ENCODE measurements at regions of chr10 and their contacts with region 1.

Region 1: GRCh38 chr10:84205049-84205852 is 10.9 kb downstream of the CDHR1 start:
- DNase-seq: peak; percentile 77
- CTCF ChIP-seq: peak; percentile 93

Region 2: DNA sequence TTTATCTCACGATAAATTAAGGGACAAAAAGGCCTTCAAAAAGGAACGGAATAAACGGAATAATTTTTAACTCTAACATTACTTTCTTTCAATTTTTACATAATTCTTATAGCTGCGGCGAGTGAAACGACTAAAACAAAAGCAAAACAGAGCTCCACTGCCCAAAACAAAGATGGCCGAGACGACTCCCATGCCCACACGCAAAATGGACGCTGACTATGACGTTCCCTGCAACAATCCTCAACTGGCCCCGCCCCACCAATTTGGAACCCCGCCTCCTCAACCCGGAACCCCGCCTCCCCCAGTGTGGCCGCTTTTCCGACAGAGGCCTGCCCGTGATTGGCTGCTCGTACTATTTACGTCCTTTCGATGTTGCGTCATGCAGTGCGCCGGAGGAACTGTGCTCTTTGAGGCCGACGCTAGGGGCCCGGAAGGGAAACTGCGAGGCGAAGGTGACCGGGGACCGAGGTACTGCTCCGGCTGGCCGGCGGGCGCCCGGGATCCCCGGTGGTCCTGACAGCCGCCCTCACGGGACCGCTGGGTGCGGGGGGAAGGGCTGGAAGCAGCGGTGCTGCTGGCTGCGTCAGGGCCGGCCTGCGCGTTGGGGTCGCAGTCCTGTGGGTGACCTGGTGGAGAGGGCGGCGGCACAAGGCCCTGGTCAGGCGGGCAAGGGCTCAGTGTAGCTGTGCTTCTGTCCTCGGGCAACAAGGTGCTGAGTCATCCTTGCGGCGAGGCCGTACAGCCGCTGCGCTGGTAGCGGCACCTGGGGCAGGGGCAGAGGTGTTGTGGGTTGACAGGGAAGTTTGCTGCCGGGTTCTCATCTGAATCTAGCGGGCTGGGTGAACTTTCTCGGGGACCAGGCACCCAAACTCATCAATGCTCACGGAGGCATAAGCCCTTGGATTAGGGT is 65.9 kb before region 1 on chr10 and contains the start of gene GHITM:
- CTCF ChIA-PET with region 1: interaction called, 78 read pairs
- POLR2A ChIA-PET with region 1: no interaction called
- DNase-seq: peak; percentile 95
- CTCF ChIP-seq: peak; percentile 3

Region 3: DNA sequence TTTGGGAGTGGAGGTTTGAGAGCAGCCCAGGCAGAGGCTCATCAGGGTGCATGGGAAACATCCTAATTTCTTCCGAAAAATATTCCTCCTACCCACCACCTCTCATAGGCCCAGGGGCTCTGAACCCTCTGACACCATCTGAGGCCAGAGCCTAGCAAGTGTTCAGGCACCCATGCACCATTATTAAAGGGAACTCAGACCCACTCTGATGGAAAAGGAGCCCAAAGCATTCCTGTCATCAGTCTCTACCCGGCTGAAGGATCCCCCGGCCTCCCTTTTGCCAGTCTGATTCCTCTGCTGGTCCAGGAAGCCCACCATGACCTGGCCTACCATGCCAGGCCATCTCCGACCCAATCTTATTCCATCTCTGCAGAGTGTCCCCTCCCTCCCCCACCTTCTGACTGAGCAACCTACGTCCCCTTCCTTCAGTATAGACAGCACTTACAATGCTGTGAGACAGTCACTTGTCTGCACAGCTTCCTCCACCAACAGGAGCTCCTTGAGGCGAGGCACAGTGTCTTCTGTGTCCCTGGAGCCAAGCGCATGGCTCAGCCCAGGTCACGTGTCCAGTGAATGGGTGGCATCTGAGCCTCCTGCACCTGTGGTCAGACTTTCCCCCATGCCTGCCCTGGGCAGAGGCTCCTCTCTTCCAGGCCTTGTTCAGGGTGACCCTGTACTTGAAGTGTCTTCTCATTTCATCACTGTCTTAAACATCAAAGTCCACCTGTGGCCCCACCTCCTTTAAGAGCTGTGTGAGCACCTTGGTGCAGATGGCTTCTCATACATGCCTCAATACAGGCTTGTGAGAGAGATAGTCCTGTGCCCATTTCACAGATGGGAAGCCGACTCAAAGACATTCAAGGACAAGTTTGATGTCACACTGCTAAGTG is 32.5 kb before region 1 on chr10:
- CTCF ChIA-PET with region 1: interaction called, 14 read pairs
- POLR2A ChIA-PET with region 1: no interaction called
- DNase-seq: peak; percentile 23
- CTCF ChIP-seq: no peak

Region 4: GRCh38 chr10:84194424-84195040 is 10.7 kb before region 1 on chr10 and contains the start of gene CDHR1:
- CTCF ChIA-PET with region 1: interaction called, 18 read pairs
- POLR2A ChIA-PET with region 1: no interaction called
- DNase-seq: peak; percentile 65
- CTCF ChIP-seq: no peak

Region 5: GRCh38 chr10:84270708-84271107 is 65.5 kb after region 1 on chr10:
- CTCF ChIA-PET with region 1: no interaction called
- POLR2A ChIA-PET with region 1: no interaction called
- DNase-seq: no peak
- CTCF ChIP-seq: no peak